ENCODE measurements at regions of chr7 and their contacts with region 1.

Region 1: GRCh38 chr7:30062591-30062990 is 34.4 kb downstream of the PLEKHA8 start:
- H3K4me3 Mint-ChIP-seq: no peak overlapping the region
- H3K27ac Mint-ChIP-seq: no peak overlapping the region
- H3K4me1 Mint-ChIP-seq: peaks cover 6% of the 10 kb centered on the region
- H3K27me3 Mint-ChIP-seq: no peaks in the 10 kb centered on the region

Region 2: GRCh38 chr7:29878081-29878688 is 184.4 kb before region 1 on chr7:
- intact Hi-C with region 1: loop called (anchors 5 kb)
- H3K4me3 Mint-ChIP-seq: no peak overlapping the region
- H3K27ac Mint-ChIP-seq: no peak overlapping the region
- H3K4me1 Mint-ChIP-seq: peaks cover under 1% of the 10 kb centered on the region
- H3K27me3 Mint-ChIP-seq: peaks cover 9% of the 10 kb centered on the region

Region 3: DNA sequence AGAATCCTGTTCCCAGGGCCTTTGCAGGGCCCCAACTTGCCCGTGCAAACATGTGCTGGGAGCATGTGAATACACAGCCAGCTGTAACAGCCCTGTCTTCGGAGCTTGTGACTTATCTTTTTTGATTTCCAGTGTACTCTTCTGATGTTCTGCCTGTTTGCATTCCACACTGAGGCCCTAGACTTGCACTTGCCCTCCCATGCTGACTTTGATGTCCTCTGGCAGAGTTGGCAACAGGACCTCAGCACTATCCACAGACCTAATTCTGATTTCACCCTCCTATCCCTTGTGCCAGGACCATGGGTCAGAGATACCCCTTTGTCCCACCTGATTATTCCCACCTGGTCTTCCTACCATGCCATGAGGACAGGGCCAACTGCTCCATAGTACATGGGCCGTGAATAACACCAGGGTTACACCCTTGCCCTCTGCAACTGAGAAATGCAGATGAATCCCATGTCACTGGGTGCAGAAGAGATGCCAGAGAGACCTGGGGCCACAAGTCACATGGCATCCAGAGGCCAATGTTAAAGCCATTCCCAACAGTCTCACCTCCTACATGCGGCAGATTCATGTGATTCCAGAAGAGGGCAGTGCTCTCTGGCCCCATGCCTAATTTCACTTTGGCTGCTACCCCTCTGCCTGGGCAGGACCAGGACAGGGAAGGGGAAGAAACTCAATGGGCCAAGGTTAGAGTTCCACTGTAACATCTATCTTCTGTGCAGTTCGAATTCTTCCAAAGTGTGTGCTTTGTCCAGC is 116.0 kb before region 1 on chr7:
- intact Hi-C with region 1: loop called (anchors 5 kb)
- H3K4me3 Mint-ChIP-seq: no peak overlapping the region
- H3K27ac Mint-ChIP-seq: no peak overlapping the region
- H3K4me1 Mint-ChIP-seq: no peaks in the 10 kb centered on the region
- H3K27me3 Mint-ChIP-seq: no peaks in the 10 kb centered on the region

Region 4: DNA sequence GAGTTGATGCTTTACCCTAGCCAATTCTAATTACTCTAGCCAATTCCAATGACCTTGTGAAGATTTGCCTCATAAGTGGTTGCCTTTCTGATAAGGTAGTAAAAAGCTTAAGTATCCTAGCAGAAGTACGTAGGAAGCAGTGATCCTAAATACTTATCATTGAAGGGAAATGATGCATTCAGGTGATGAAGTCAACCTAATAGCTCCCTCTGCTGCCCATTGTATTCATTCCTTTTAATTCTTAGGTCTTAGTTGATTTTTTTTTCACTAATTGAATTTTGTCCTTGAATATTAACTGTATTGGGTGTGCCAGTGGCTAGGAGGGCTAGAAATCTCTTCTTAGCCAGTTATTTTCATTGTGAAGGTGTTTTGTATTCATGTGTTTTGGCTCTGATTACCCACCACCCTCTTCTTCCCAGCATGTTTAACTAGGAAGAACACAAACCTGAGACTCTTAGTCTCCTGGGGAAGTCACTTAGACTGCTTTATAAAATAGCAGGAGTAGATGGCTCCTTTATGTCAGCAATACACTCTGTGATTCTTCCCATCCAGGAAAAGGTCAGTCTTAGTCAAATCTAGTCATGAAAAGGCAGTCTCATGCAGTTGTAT is 11.9 kb after region 1 on chr7:
- intact Hi-C with region 1: no loop called
- H3K4me3 Mint-ChIP-seq: no peak overlapping the region
- H3K27ac Mint-ChIP-seq: no peak overlapping the region
- H3K4me1 Mint-ChIP-seq: peaks cover 9% of the 10 kb centered on the region
- H3K27me3 Mint-ChIP-seq: no peaks in the 10 kb centered on the region